Ascending aorta (tissue), 2 donors: ENCODE measurements at regions of chr1 and their contacts with region 1.

Region 1: DNA sequence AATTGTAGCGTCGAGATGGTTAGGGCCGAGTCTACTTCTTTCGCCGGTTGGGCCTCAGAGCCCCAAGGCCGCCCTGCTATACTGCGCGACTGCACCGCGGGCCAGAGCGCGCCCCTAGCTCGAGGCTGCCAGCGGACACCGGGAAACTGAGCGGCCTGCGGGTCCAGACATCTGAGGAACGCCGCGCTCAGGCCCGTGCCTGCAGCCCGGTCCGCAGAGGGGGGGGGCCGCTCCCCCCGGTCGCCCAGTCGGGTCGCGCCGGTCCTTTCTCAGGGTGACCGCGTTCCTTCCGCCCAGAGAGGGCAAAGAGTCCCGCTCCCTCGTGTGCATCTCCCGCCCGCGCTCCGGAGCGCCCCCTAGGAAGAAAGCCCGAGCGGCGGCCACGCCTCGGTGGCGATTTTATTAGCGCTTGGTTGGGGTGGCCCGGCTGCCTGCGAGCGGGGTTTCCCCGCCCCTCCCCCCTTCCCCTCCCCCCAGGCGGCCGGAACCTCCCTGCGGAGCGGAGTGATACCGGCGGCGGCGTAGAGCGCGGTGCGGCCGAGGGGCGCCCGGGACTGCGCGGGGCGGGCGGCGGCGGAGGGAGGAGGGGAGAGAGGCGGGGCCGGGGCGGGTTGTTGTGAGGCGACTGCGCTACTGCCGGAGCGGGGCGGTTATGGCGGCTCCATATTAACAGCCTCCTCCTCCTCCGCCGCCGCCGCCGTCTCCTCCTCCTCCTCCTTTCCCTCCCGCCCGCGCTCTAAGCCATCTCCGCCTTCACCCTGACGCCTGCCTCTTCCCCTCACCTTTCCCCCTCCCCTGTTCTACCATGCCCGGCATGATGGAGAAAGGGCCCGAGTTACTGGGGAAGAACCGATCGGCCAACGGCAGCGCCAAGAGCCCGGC is at the start of gene RCOR3:
- DNase-seq: peak; percentile 66 to 96
- H3K4me3 ChIP-seq: peak within 1 kb of the TSS; percentile 94 to 99
- H3K27ac ChIP-seq: peak within 1 kb of the TSS; percentile 97 to 100
- H3K4me1 ChIP-seq: peaks cover 0 to 21% of the 10 kb centered on the region in 2 donors
- H3K27me3 ChIP-seq: no peaks in the 10 kb centered on the region
- CTCF ChIP-seq: peak in 2 of 3 experiments; percentile 46 to 47
- total RNA-seq, gene RCOR3: 10.3 TPM

Region 2: GRCh38 chr1:210233216-210234020 is 1025.6 kb before region 1 on chr1:
- intact Hi-C with region 1: loop called (anchors 10 kb)
- DNase-seq: peak in 1 of 2 donors; percentile 72
- H3K4me3 ChIP-seq: peak overlapping the region; percentile 87 to 90
- H3K27ac ChIP-seq: peak overlapping the region; percentile 91 to 92
- H3K4me1 ChIP-seq: peaks cover 7 to 35% of the 10 kb centered on the region in 2 donors
- H3K27me3 ChIP-seq: no peaks in the 10 kb centered on the region
- CTCF ChIP-seq: no peak

Region 3: GRCh38 chr1:210489491-210489890 is 769.5 kb before region 1 on chr1:
- intact Hi-C with region 1: no loop called
- DNase-seq: no peak
- H3K4me3 ChIP-seq: no peak overlapping the region
- H3K27ac ChIP-seq: no peak overlapping the region
- H3K4me1 ChIP-seq: no peaks in the 10 kb centered on the region
- H3K27me3 ChIP-seq: no peaks in the 10 kb centered on the region
- CTCF ChIP-seq: no peak

Region 4: DNA sequence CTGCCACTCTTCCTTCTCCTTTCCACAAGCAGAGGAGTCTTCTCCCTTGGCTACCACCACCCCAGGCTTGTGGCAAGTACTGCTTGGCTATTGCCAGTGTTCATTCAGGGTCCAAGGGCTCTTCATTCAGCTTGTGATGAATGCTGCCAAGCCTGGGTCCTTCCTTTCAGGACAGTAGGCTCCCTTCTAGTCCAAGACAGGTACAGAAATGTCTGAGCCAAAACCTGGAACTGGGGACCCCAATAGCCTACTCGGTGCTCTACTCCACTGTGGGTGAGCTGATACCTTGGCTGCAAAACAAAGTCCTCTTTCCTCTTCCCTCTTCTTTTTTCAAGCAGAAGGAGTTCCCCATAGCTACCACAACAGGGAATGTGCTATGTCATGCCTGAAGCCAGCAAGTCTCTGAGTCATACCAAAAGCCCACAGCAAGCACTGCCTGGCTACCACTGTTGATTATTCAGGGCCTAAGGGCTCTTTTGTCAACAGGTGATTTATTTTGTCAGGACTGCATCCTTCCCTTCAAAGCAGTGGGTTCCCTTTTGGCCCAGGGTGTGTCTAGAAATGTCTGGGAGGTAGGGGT is 661.4 kb before region 1 on chr1:
- intact Hi-C with region 1: loop called (anchors 5 kb)
- DNase-seq: no peak
- H3K4me3 ChIP-seq: no peak overlapping the region
- H3K27ac ChIP-seq: peak overlapping the region; percentile 78 to 83
- H3K4me1 ChIP-seq: peaks cover 0 to 6% of the 10 kb centered on the region in 2 donors
- H3K27me3 ChIP-seq: no peaks in the 10 kb centered on the region
- CTCF ChIP-seq: no peak

Region 5: GRCh38 chr1:211118407-211119102 is 140.4 kb before region 1 on chr1:
- intact Hi-C with region 1: no loop called
- DNase-seq: no peak
- H3K4me3 ChIP-seq: no peak overlapping the region
- H3K27ac ChIP-seq: no peak overlapping the region
- H3K4me1 ChIP-seq: no peaks in the 10 kb centered on the region
- H3K27me3 ChIP-seq: no peaks in the 10 kb centered on the region
- CTCF ChIP-seq: no peak

Region 6: GRCh38 chr1:211198111-211198510 is 60.9 kb before region 1 on chr1:
- intact Hi-C with region 1: no loop called
- DNase-seq: no peak
- H3K4me3 ChIP-seq: no peak overlapping the region
- H3K27ac ChIP-seq: no peak overlapping the region
- H3K4me1 ChIP-seq: no peaks in the 10 kb centered on the region
- H3K27me3 ChIP-seq: no peaks in the 10 kb centered on the region
- CTCF ChIP-seq: no peak

Region 7: DNA sequence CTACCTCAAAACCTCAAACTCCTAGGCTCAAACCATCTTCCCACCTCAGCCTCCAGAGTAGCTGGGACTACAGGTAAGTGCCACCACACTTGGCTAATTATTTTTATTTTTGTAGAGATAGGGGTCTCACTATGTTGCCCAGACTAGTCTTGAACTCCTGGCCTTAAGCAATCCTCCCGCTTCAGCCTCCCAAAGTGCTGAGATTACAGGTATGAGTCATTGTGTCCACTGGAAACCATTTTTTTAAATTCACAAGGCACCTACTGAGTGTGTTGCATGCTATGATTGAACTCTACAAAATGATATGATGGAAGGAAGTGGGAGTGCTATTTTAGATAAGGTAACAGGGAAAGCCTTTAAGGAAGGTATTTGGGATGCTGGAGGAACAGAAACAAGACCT is 41.6 kb before region 1 on chr1:
- intact Hi-C with region 1: no loop called
- DNase-seq: no peak
- H3K4me3 ChIP-seq: no peak overlapping the region
- H3K27ac ChIP-seq: no peak overlapping the region
- H3K4me1 ChIP-seq: no peaks in the 10 kb centered on the region
- H3K27me3 ChIP-seq: no peaks in the 10 kb centered on the region
- CTCF ChIP-seq: no peak

Region 8: GRCh38 chr1:211326528-211327345 is 67.7 kb after region 1 on chr1 and contains the start of gene TRAF5:
- intact Hi-C with region 1: loop called (anchors 2 kb)
- DNase-seq: peak in 1 of 2 donors; percentile 72
- H3K4me3 ChIP-seq: peak within 1 kb of the TSS; percentile 91 to 93
- H3K27ac ChIP-seq: peak within 1 kb of the TSS; percentile 84 to 98
- H3K4me1 ChIP-seq: peaks cover 15 to 31% of the 10 kb centered on the region in 2 donors
- H3K27me3 ChIP-seq: no peaks in the 10 kb centered on the region
- CTCF ChIP-seq: no peak
- total RNA-seq, gene TRAF5: 3.9 TPM

Region 9: GRCh38 chr1:211382714-211383480 is 123.9 kb after region 1 on chr1:
- intact Hi-C with region 1: loop called (anchors 1 kb)
- DNase-seq: peak; percentile 59 to 96
- H3K4me3 ChIP-seq: peak overlapping the region; percentile 71 to 96
- H3K27ac ChIP-seq: peak overlapping the region; percentile 93 to 100
- H3K4me1 ChIP-seq: no peaks in the 10 kb centered on the region
- H3K27me3 ChIP-seq: no peaks in the 10 kb centered on the region
- CTCF ChIP-seq: peak in 1 of 3 experiments; percentile 3

Region 10: DNA sequence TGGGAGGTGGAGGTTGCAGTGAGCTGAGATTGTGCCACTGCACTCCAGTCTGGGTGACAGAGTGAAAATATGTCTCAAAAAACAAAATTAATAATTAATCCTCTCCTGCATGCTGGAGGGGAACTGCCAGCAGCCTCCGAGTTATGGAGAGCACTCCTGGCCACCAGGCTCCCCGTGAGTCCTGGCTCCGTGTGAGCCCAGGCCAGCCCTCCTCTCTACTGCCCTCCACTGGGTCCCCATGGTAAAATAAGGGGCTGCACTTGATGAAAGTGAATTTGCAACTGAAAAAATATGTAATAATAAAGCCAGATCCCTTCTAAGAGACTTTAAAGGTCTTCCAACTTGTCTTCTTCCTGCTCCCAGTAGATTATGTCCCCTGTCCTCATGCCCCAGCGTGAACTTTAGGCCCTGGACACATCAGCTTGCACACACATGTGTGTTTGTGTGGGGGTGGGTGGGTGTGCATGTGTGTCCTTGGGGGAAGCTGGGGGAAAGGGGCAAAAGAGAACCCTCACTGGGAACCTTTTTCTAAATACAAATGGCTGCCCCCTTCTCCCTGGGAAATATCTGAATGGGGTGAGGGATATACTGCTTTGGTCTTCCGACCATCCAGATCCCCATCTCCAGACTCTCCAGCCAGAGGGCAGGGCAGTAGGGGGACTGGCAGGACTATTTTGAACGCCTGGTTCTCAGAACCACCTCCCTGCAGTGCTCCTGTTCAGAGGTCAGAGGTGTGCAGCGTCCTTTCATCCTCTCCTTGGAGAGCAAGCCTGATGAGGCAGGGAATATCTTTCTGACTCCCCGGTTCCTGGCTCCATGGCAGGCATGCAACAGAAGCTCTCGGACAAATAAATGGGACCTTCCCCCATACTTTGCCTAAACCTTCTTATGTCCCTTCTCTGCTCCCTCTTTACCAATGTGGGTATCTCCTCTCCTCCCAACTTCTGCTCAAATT is 390.3 kb after region 1 on chr1:
- intact Hi-C with region 1: loop called (anchors 10 kb)
- DNase-seq: peak in 1 of 2 donors; percentile 78
- H3K4me3 ChIP-seq: no peak overlapping the region
- H3K27ac ChIP-seq: no peak overlapping the region
- H3K4me1 ChIP-seq: peaks cover 0 to 7% of the 10 kb centered on the region in 2 donors
- H3K27me3 ChIP-seq: no peaks in the 10 kb centered on the region
- CTCF ChIP-seq: peak; percentile 52 to 85 (median 79)